GM12878 (cell line): ENCODE measurements at regions of chr5 and their contacts with region 1.

Region 1: GRCh38 chr5:159061179-159061796 is 38.4 kb downstream of the EBF1 start:
- DNase-seq: no peak
- ATAC-seq: peak; percentile 39
- H3K4me3 ChIP-seq: no peak overlapping the region
- H3K27ac ChIP-seq: no peak overlapping the region
- H3K4me1 ChIP-seq: peaks cover 12% of the 10 kb centered on the region; the same call in 1 of the 2 replicates
- H3K27me3 ChIP-seq: no peaks in the 10 kb centered on the region
- CTCF ChIP-seq: no peak
- EP300 ChIP-seq: no peak
- POLR2A ChIP-seq: no peak
- RAD21 ChIP-seq: no peak

Region 2: GRCh38 chr5:158292981-158293380 is 768.3 kb before region 1 on chr5:
- CTCF ChIA-PET with region 1: no interaction called
- POLR2A ChIA-PET with region 1: no interaction called
- RAD21 ChIA-PET with region 1: no interaction called
- SMC1A ChIA-PET with region 1: no interaction called
- in situ Hi-C with region 1: no loop called
- intact Hi-C with region 1: no loop called
- DNase-seq: no peak
- ATAC-seq: no peak
- H3K4me3 ChIP-seq: no peak overlapping the region
- H3K27ac ChIP-seq: no peak overlapping the region
- H3K4me1 ChIP-seq: no peaks in the 10 kb centered on the region
- H3K27me3 ChIP-seq: no peaks in the 10 kb centered on the region
- CTCF ChIP-seq: no peak
- EP300 ChIP-seq: no peak
- POLR2A ChIP-seq: no peak
- RAD21 ChIP-seq: no peak

Region 3: DNA sequence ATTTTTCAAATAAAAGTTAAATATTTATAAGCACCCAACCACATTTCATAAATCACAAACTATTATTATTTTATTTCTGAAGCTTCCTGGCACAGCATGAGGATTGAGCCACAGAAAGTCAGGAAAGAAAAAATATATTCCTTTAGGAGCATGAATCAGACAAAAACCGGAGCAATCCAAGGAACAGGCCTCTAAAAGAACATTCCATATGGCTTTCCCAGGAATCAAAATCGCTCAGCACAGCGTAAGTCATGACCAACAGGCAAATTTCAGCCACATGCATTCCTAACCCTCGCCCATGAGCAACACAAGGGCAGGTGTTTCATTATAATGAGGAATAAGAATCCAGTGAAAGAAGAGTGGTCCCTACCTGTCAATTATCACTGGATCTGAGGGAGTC is 11.7 kb after region 1 on chr5:
- CTCF ChIA-PET with region 1: interaction called, 3 read pairs
- POLR2A ChIA-PET with region 1: interaction called, 7 read pairs
- RAD21 ChIA-PET with region 1: interaction called, 3 read pairs
- SMC1A ChIA-PET with region 1: interaction called, 11 read pairs
- in situ Hi-C with region 1: no loop called
- intact Hi-C with region 1: no loop called
- DNase-seq: no peak
- ATAC-seq: no peak
- H3K4me3 ChIP-seq: no peak overlapping the region
- H3K27ac ChIP-seq: no peak overlapping the region
- H3K4me1 ChIP-seq: no peaks in the 10 kb centered on the region
- H3K27me3 ChIP-seq: no peaks in the 10 kb centered on the region
- CTCF ChIP-seq: no peak
- EP300 ChIP-seq: no peak
- POLR2A ChIP-seq: no peak
- RAD21 ChIP-seq: no peak

Region 4: DNA sequence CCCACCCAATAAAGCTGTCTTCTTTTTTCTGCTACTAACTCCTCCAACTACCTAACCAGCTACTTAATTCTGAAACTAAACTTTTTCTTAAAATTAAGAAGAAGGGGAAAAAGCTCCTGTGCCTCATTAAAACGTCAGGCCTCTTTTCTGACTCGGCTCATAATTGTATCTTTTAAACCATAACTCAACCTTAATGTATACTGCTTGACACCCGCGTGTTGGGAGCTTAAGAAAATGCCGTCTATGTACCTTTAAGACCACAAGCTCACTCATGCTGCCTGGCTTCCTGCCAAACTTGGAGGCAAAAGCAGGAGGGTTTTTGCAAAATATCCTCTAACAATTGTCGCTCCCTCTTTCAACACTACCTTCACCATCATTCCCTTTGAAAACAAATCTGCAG is 33.5 kb after region 1 on chr5:
- CTCF ChIA-PET with region 1: interaction called, 3 read pairs
- POLR2A ChIA-PET with region 1: interaction called, 11 read pairs
- RAD21 ChIA-PET with region 1: interaction called, 8 read pairs
- SMC1A ChIA-PET with region 1: interaction called, 24 read pairs
- in situ Hi-C with region 1: no loop called
- intact Hi-C with region 1: loop called (anchors 2 kb)
- DNase-seq: no peak
- ATAC-seq: peak; percentile 35
- H3K4me3 ChIP-seq: peak overlapping the region; percentile 88
- H3K27ac ChIP-seq: peak overlapping the region; percentile 68
- H3K4me1 ChIP-seq: peaks cover 5% of the 10 kb centered on the region; the same call in 1 of the 2 replicates
- H3K27me3 ChIP-seq: no peaks in the 10 kb centered on the region
- CTCF ChIP-seq: no peak
- EP300 ChIP-seq: no peak
- POLR2A ChIP-seq: no peak
- RAD21 ChIP-seq: no peak

Region 5: DNA sequence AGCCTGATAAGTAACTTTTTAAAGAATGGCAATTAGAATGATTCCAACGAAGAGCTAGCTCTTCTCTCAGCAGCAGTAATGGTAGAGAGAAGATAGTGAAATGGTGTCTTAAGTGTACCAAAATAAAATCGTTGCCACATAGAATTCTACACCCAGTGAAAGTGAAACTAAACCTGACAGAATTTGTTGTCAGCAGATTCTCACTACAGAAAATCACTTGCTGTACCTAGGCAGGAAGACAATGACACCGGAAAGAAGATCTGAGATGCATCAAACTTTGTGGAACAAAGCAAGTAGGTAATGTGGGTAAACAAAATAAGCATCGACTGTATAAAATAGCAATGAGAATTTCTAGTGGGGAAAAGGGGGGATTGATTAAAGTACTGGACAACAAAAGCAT is 59.2 kb after region 1 on chr5:
- CTCF ChIA-PET with region 1: no interaction called
- POLR2A ChIA-PET with region 1: no interaction called
- RAD21 ChIA-PET with region 1: no interaction called
- SMC1A ChIA-PET with region 1: no interaction called
- in situ Hi-C with region 1: no loop called
- intact Hi-C with region 1: no loop called
- DNase-seq: no peak
- ATAC-seq: peak; percentile 81
- H3K4me3 ChIP-seq: no peak overlapping the region
- H3K27ac ChIP-seq: no peak overlapping the region
- H3K4me1 ChIP-seq: no peaks in the 10 kb centered on the region
- H3K27me3 ChIP-seq: no peaks in the 10 kb centered on the region
- CTCF ChIP-seq: no peak
- EP300 ChIP-seq: no peak
- POLR2A ChIP-seq: no peak
- RAD21 ChIP-seq: no peak

Region 6: GRCh38 chr5:159471904-159472303 is 410.6 kb after region 1 on chr5:
- CTCF ChIA-PET with region 1: no interaction called
- POLR2A ChIA-PET with region 1: no interaction called
- RAD21 ChIA-PET with region 1: no interaction called
- SMC1A ChIA-PET with region 1: no interaction called
- in situ Hi-C with region 1: no loop called
- intact Hi-C with region 1: no loop called
- DNase-seq: no peak
- ATAC-seq: no peak
- H3K4me3 ChIP-seq: no peak overlapping the region
- H3K27ac ChIP-seq: no peak overlapping the region
- H3K4me1 ChIP-seq: peaks cover 2% of the 10 kb centered on the region; the same call in 1 of the 2 replicates
- H3K27me3 ChIP-seq: no peaks in the 10 kb centered on the region
- CTCF ChIP-seq: no peak
- EP300 ChIP-seq: no peak
- POLR2A ChIP-seq: no peak
- RAD21 ChIP-seq: no peak